Cardiac septum (tissue), 1 donor: ENCODE measurements at regions of chr11 and their contacts with region 1.

Region 1: DNA sequence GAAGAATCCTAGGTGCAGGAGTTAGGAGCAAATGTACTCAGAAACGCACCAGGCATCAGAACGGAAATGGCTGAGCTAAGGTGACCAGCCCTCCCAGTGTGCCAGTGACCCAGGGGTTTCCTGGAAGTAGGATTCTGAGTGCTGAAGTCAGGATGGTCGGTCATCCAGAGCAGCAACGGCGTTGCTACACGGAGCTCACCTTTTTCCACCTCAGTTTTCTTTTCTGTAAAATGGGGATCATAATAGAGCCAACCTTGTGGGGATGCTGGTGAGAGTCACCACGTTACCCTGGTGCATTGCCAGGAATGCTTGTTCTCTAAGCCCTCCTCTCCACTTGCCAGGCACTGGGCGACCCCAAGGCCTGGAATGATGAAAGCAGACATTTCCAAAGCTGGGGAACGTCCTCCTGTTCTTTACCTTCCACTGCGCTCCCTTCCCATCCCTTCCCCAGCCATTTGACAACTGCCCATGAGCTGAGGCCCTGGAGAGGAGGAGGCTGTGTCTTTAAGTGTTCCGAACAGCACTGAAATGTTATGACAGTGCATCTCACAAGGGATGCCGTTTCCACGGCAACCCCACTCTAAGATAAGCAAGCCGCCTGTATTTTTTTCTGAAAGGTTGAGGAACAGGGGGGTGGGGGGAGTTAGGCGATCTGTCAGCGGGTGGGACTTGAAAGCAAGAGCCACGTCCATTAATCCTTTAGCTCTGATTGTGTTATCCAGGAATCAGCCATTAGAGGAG is 66.8 kb downstream of the TSPAN18 start:
- DNase-seq: no peak

Region 2: GRCh38 chr11:44760917-44761550 is 32.5 kb before region 1 on chr11:
- intact Hi-C with region 1: no loop called
- DNase-seq: no peak

Region 3: DNA sequence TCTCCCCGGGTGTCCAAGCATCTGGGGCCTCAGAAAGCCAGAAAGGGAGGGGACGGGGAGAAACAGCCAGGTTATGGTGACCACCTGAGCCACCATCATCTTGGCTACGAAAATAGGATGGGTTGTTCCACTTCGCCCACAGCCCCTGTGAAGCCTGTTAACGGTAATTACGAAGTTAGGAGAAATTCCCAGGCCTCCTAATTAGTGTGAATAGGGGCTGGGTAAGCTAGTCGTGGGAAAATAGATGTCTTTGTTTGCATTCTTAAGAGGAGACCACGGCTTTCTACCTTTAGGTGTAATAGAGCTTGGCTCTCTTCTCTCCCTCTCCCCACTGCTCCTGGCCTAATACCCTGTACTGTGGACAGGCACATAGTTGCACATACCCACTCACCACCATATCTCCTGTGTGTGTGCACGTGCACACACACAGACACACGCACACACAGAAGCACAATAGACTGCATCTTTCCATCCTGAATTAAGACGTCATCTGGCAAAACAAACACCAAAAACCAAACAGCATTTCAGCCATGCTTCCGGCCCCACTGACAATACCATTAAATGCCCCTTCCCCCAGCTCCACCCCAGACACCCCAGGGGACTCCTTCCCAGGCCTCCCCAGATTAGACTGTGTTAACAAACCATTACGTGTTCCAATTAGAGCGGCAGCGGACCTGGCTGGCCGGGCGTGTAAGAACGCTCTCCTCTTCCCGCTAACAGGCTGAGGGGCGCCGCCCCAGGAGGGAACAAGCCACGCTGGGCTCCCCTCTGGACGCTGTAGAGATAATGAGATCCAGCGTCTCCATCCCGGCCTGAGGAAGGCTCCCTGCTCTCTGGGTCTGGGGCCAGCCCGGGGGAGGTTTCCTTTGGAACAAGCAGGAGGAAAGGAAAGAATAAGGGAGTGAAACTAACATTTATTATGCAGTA is 84.3 kb after region 1 on chr11:
- intact Hi-C with region 1: loop called (anchors 5 kb)
- DNase-seq: no peak